HEK293 (cell line): ENCODE measurements at regions of chr16 and their contacts with region 1.

Region 1: DNA sequence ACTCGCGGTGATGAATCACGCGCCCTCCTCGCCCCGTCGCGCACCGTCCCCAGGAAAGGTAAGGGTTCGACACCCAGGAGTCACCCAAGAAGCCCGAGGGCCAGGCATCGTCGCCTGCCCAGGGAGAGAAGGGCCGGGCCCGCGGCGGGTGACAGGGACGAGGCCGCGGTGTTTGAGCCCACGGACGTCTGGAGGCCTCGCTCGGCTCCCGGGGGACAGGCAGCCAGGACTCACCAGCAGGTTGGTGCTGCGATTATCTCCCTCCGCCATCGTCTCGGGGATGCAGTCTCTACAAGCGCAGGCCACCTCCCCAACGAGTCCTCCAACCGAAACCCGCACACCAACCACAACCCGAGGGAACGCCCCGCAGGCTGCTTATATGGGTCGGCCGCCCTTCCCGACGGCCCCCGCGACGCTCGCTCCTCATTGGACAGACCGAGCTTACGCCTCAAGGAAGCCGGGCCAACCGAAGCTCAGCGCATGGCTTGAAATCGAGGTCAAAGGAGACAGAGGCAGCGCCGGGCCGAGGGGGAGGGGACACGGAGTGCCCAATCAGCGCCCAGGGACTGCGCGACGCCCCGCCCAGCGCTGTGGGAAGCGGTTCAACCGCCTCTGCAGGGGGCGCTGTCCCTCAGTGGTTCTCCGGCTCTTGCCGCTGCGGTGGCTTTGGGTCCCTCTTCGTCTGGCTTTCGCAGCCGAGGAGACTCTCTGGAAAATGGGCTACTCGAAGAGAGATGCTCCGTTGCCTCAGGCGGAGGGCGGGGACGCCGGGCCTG is at the start of gene ARL6IP1:
- H3K4me3 ChIP-seq: peak within 1 kb of the TSS; percentile 98
- H3K27ac ChIP-seq: peak within 1 kb of the TSS; percentile 86
- H3K4me1 ChIP-seq: peaks cover 10% of the 10 kb centered on the region; the same call in 1 of the 2 replicates
- CTCF ChIP-seq: peak; percentile 99

Region 2: GRCh38 chr16:18789850-18790724 is 11.3 kb before region 1 on chr16 and contains the start of gene RPS15A:
- CTCF ChIA-PET with region 1: interaction called, 8 read pairs
- POLR2A ChIA-PET with region 1: interaction called, 329 read pairs
- H3K4me3 ChIP-seq: peak within 1 kb of the TSS; percentile 66
- H3K27ac ChIP-seq: peak within 1 kb of the TSS; percentile 99
- H3K4me1 ChIP-seq: peaks cover 4% of the 10 kb centered on the region; the same call in 1 of the 2 replicates
- CTCF ChIP-seq: no peak; the same call in 1 of the 2 replicates

Region 3: GRCh38 chr16:18816286-18816685 is 14.9 kb after region 1 on chr16:
- CTCF ChIA-PET with region 1: interaction called, 18 read pairs
- POLR2A ChIA-PET with region 1: interaction called, 9 read pairs
- H3K4me3 ChIP-seq: no peak overlapping the region
- H3K27ac ChIP-seq: no peak overlapping the region
- H3K4me1 ChIP-seq: no peaks in the 10 kb centered on the region
- CTCF ChIP-seq: no peak

Region 4: DNA sequence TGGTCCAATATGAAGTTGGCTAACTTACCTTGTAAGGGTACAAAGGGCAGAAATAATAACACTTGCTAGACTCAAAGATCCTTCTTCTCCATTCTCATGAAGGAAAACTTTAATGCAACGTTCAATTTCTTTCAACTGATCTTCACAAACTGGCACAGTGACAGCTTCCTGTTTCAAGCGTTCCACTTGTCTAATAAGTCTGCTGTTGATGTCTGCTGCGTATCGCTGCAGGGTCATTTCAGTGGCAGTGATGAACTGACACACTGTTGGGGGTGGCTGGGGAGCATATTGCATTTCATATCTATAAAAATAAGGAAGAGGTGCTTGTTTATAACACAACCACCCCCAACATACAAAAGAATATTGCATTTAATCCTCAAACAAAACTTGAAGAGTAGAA is 33.5 kb after region 1 on chr16:
- CTCF ChIA-PET with region 1: interaction called, 10 read pairs
- POLR2A ChIA-PET with region 1: interaction called, 9 read pairs
- H3K4me3 ChIP-seq: no peak overlapping the region
- H3K27ac ChIP-seq: no peak overlapping the region
- H3K4me1 ChIP-seq: no peaks in the 10 kb centered on the region
- CTCF ChIP-seq: no peak

Region 5: DNA sequence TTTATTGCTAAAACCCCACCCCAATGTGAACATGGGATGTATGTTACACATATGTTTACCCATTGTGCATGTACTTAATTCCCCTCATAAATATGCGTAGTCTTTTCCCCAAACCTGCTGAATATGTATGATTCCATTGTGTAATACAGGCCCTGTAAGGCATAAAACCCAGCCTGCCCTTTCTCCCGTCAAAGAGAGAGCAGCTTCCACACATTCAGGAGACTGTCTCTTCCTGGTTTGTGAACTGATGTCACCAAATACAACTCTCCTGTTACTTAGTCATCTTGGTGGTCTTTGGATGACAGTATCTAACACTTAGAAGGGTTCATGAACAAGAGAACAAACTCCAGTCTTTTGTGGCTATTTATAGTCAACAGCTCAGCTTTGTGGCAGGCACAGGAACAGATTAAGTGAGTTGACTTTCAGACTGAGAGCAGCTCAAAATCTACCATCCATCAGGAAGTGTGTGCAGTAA is 157.7 kb after region 1 on chr16:
- CTCF ChIA-PET with region 1: interaction called, 3 read pairs
- POLR2A ChIA-PET with region 1: interaction called, 13 read pairs
- H3K4me3 ChIP-seq: no peak overlapping the region
- H3K27ac ChIP-seq: no peak overlapping the region
- H3K4me1 ChIP-seq: peaks cover 6% of the 10 kb centered on the region; the same call in 1 of the 2 replicates
- CTCF ChIP-seq: no peak

Region 6: DNA sequence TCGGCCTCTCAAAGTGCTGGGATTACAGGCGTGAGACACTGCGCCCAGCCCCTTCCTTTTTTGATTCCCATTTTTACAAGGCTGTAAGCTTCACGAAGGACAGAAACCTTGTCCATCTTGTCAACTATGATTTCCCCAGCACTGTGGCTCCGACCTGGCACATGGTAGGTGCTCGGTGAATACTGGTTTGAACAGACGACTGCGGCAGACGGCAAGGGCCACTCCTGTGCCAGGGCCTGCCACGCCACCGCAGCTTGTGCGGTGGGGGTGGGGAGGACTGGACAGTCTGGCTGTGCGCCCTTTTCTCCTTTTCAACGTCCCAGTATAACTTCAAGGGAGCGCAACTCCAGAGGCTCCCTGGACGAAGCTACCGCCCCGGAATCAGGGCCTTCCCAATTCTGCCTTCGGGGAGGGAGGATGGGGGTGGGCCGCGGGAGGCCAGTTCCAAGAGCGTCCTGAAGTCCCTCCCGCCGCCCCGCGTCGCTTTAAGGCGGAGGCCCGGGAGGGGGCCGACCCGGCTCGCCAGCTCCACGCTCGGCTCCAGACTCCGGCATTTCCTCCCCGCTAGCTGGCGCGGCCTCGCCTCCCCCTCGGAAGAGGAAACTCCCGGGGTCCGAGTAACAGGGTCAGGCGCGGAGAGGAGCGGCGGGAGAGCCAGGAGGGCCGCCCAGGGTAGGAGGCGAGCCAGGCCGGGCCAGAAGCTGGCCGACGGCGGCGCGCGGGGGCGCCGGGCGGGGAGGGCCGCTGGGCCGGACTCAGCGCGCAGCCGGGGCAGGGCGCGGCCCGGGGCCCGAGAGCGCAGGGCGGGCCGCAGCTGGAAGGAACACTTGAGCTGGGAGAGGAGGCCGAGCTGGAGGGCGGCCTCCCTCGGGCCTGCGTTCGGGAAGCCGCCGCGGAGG is 312.3 kb after region 1 on chr16 and contains the start of gene ITPRIPL2:
- CTCF ChIA-PET with region 1: no interaction called
- POLR2A ChIA-PET with region 1: interaction called, 12 read pairs
- H3K4me3 ChIP-seq: peak within 1 kb of the TSS; percentile 69
- H3K27ac ChIP-seq: peak within 1 kb of the TSS; percentile 82
- H3K4me1 ChIP-seq: peaks cover 2% of the 10 kb centered on the region; the same call in 1 of the 2 replicates
- CTCF ChIP-seq: 0 out of 2 replicates have a peak, but pooled peaks have one; percentile 32

Region 7: GRCh38 chr16:19375561-19376158 is 574.3 kb after region 1 on chr16:
- CTCF ChIA-PET with region 1: no interaction called
- POLR2A ChIA-PET with region 1: interaction called, 11 read pairs
- H3K4me3 ChIP-seq: no peak overlapping the region
- H3K27ac ChIP-seq: no peak overlapping the region
- H3K4me1 ChIP-seq: no peaks in the 10 kb centered on the region
- CTCF ChIP-seq: peak; percentile 57; the same call in 1 of the 2 replicates